ENCODE measurements at regions of chr1 and their contacts with region 1.

Region 1: DNA sequence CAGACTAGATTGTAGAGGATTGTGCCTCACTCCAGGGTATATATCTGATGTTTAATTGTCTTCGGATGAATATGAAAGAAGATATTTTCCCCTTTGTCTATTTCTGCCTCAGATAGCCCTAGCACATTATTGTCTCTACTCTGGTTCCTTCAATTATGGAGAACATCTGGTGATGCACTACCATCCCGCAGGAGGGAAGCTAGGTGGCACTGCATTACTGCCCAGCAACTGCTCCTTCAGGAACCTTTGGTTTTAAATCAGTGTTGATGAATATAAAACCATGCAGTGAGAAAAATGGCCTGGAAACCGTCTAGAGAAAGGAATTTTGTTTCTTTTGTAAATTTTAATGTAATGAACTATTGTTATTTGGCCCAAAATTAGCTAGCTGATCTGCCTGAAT is 68.5 kb downstream of the GPR88 start:
- DNase-seq: peak in 1 of 6 donors; percentile 52
- ATAC-seq: peak in 3 of 4 donors; percentile 84 to 90 (median 87)
- H3K4me3 ChIP-seq: no peak overlapping the region
- H3K27ac ChIP-seq: no peak overlapping the region
- H3K4me1 ChIP-seq: no peaks in the 10 kb centered on the region
- H3K27me3 ChIP-seq: no peaks in the 10 kb centered on the region
- CTCF ChIP-seq: peak; percentile 10 to 41 (median 34)

Region 2: GRCh38 chr1:100396651-100397050 is 209.8 kb before region 1 on chr1:
- intact Hi-C with region 1: no loop called
- DNase-seq: no peak
- ATAC-seq: no peak
- H3K4me3 ChIP-seq: no peak overlapping the region
- H3K27ac ChIP-seq: no peak overlapping the region
- H3K4me1 ChIP-seq: peaks cover 0 to 3% (median 0%) of the 10 kb centered on the region in 3 donors
- H3K27me3 ChIP-seq: no peaks in the 10 kb centered on the region
- CTCF ChIP-seq: no peak

Region 3: DNA sequence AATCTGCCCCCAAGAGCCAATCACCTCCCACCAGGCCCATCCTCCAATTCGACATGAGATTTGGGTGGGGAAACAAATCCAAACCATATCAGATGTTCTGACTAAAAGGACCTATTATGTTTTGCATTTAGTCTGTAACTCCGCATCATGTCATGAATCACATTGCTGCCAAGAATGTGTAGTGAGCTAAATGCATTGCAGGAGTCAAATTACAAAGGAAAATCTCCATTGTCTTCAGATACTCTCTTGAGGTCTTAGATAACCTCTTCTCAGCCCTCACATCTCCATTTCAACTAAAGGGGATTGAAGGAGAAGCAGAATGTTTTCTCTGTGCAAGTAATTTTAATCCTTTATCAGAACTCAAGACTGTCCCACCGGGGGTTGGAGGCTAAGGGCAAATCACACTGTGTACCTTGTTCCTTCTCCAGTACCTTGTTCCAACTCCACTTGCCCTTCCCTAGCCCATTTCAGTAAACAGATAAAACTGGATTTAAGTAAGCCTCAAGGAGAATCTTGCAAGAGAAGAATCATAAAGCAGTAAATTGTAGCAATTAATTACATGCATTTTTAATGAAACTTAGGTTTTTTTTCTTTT is 254.1 kb after region 1 on chr1:
- intact Hi-C with region 1: loop called in 2 of 3 experiments (anchors 5 to 10 kb)
- DNase-seq: no peak
- ATAC-seq: no peak
- H3K4me3 ChIP-seq: no peak overlapping the region
- H3K27ac ChIP-seq: no peak overlapping the region
- H3K4me1 ChIP-seq: no peaks in the 10 kb centered on the region
- H3K27me3 ChIP-seq: no peaks in the 10 kb centered on the region
- CTCF ChIP-seq: no peak

Measured in pancreas (tissue), 10 donors.